ENCODE measurements at regions of chr16 and their contacts with region 1.

Region 1: GRCh38 chr16:8936421-8936820 is 27.3 kb downstream of the USP7 start:
- DNase-seq: peak in 1 of 2 experiments; percentile 39
- H3K4me3 ChIP-seq: no peak overlapping the region
- H3K27ac ChIP-seq: no peak overlapping the region
- H3K4me1 ChIP-seq: peaks cover 3 to 10% (median 6%) of the 10 kb centered on the region in 4 experiments
- H3K27me3 ChIP-seq: no peaks in the 10 kb centered on the region
- CTCF ChIP-seq: peak; percentile 76 to 77 (median 77)
- EP300 ChIP-seq: no peak
- POLR2A ChIP-seq: no peak
- RAD21 ChIP-seq: peak; percentile 60 to 74

Region 2: DNA sequence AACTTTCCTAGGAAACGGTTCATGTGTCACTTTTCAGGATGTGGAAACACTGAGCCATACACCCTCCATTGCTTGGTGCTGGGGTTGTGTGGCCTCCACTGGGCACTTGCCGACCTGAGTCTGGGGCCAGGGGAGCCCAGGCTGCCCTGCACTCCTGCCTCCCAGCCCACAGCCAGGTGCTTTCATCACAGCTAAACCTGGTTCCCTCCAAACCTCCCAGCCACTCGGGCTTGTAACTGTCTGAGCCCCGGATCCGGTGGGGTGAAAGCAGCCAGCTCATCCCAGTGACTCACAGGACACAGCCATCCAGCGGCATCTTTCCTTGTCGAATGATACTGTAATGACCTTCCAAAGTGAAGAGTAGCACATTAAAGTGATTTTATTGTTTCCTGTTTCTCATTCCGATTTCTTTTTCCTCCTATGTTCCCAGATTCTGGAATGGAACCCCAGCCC is 87.5 kb before region 1 on chr16:
- CTCF ChIA-PET with region 1: no interaction called
- POLR2A ChIA-PET with region 1: no interaction called
- DNase-seq: no peak
- H3K4me3 ChIP-seq: no peak overlapping the region
- H3K27ac ChIP-seq: no peak overlapping the region; the same call in 1 of the 2 replicates
- H3K4me1 ChIP-seq: peaks cover 0 to 19% (median 9%) of the 10 kb centered on the region in 4 experiments; a peak in 6 of 7 replicates
- H3K27me3 ChIP-seq: no peaks in the 10 kb centered on the region
- CTCF ChIP-seq: no peak
- EP300 ChIP-seq: no peak
- POLR2A ChIP-seq: 0 out of 3 replicates have a peak, but pooled peaks of 1 of the 2 experiments have one; percentile 19
- RAD21 ChIP-seq: no peak

Region 3: DNA sequence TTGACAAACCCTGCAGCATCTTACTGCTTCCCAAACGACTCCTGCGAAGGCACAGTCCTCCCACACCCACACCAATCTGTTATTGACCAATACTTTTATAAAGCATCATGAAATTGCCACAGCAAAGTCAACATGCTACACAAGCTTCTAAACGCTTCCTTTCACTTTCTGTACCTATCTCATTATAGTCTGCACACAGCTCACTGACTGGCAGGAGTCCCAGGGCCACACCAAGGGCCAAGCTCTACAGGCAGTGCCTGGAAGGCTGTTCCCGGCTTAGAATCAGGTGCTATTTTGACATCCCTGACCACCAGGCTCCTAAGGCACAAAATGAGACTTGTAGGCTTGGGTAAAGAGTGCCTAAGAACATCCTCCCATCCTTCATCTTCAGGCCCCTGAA is 12.2 kb before region 1 on chr16:
- CTCF ChIA-PET with region 1: interaction called, 15 read pairs
- POLR2A ChIA-PET with region 1: interaction called, 3 read pairs
- DNase-seq: no peak
- H3K4me3 ChIP-seq: no peak overlapping the region
- H3K27ac ChIP-seq: no peak overlapping the region
- H3K4me1 ChIP-seq: no peaks in the 10 kb centered on the region; a peak in 1 of 7 replicates
- H3K27me3 ChIP-seq: no peaks in the 10 kb centered on the region
- CTCF ChIP-seq: no peak
- EP300 ChIP-seq: no peak
- POLR2A ChIP-seq: no peak
- RAD21 ChIP-seq: no peak

Region 4: GRCh38 chr16:8971416-8971815 is 35.0 kb after region 1 on chr16:
- CTCF ChIA-PET with region 1: interaction called, 11 read pairs
- POLR2A ChIA-PET with region 1: no interaction called
- DNase-seq: no peak
- H3K4me3 ChIP-seq: no peak overlapping the region
- H3K27ac ChIP-seq: no peak overlapping the region
- H3K4me1 ChIP-seq: peaks cover 5 to 11% (median 9%) of the 10 kb centered on the region in 4 experiments; a peak in 4 of 7 replicates
- H3K27me3 ChIP-seq: no peaks in the 10 kb centered on the region
- CTCF ChIP-seq: no peak
- EP300 ChIP-seq: no peak
- POLR2A ChIP-seq: no peak
- RAD21 ChIP-seq: no peak

Region 5: GRCh38 chr16:9016824-9017223 is 80.4 kb after region 1 on chr16:
- CTCF ChIA-PET with region 1: interaction called, 44 read pairs
- POLR2A ChIA-PET with region 1: interaction called, 3 read pairs
- DNase-seq: no peak
- H3K4me3 ChIP-seq: no peak overlapping the region
- H3K27ac ChIP-seq: no peak overlapping the region
- H3K4me1 ChIP-seq: peaks cover 0 to 8% (median 4%) of the 10 kb centered on the region in 4 experiments; a peak in 4 of 7 replicates
- H3K27me3 ChIP-seq: no peaks in the 10 kb centered on the region
- CTCF ChIP-seq: no peak
- EP300 ChIP-seq: no peak
- POLR2A ChIP-seq: no peak
- RAD21 ChIP-seq: no peak

Region 6: GRCh38 chr16:9072806-9073341 is 136.5 kb after region 1 on chr16:
- CTCF ChIA-PET with region 1: no interaction called
- POLR2A ChIA-PET with region 1: no interaction called
- DNase-seq: no peak
- H3K4me3 ChIP-seq: no peak overlapping the region
- H3K27ac ChIP-seq: no peak overlapping the region
- H3K4me1 ChIP-seq: peaks cover 0 to 4% (median 0%) of the 10 kb centered on the region in 4 experiments; a peak in 1 of 7 replicates
- H3K27me3 ChIP-seq: no peaks in the 10 kb centered on the region; a peak in 1 of 7 replicates
- CTCF ChIP-seq: no peak
- EP300 ChIP-seq: no peak
- POLR2A ChIP-seq: no peak
- RAD21 ChIP-seq: no peak

Region 7: GRCh38 chr16:9134739-9135138 is 198.3 kb after region 1 on chr16:
- CTCF ChIA-PET with region 1: interaction called, 11 read pairs
- POLR2A ChIA-PET with region 1: no interaction called
- DNase-seq: peak in 1 of 2 experiments; percentile 79
- H3K4me3 ChIP-seq: no peak overlapping the region
- H3K27ac ChIP-seq: no peak overlapping the region
- H3K4me1 ChIP-seq: no peaks in the 10 kb centered on the region; a peak in 2 of 7 replicates
- H3K27me3 ChIP-seq: no peaks in the 10 kb centered on the region
- CTCF ChIP-seq: peak; percentile 76 to 86 (median 84)
- EP300 ChIP-seq: no peak
- POLR2A ChIP-seq: no peak
- RAD21 ChIP-seq: peak; percentile 89 to 94

Measured in H1 (cell line).